ENCODE measurements at regions of chr4 and their contacts with region 1.

Region 1: DNA sequence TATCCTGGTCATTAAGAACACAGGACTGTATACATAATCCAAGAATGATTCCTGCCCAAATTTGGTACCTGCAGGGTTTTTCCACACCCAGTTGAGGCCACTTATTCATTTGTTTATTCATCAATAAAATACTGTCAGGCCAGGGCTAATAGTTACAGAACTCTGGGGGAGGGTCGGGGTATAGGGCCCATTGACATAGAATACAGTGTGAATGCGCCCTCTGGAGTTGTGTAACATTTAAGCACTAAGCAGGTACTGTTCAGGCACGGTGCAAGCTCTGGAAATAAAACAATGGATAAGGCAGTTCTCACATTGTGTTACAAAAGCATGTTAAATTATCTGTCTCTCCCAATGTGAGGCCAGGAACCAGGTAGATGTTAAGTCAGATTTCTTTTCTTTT is 30.8 kb upstream of the LRBA start:
- DNase-seq: peak; percentile 36
- H3K4me3 Mint-ChIP-seq: no peak overlapping the region
- H3K27ac Mint-ChIP-seq: no peak overlapping the region
- H3K4me1 Mint-ChIP-seq: peaks cover 4% of the 10 kb centered on the region
- H3K27me3 Mint-ChIP-seq: no peaks in the 10 kb centered on the region

Region 2: GRCh38 chr4:150010525-150011126 is 1035.3 kb before region 1 on chr4:
- CTCF ChIA-PET with region 1: no interaction called
- intact Hi-C with region 1: loop called (anchors 10 kb)
- DNase-seq: peak; percentile 15
- H3K4me3 Mint-ChIP-seq: no peak overlapping the region
- H3K27ac Mint-ChIP-seq: no peak overlapping the region
- H3K4me1 Mint-ChIP-seq: no peaks in the 10 kb centered on the region
- H3K27me3 Mint-ChIP-seq: peaks cover 10% of the 10 kb centered on the region

Region 3: DNA sequence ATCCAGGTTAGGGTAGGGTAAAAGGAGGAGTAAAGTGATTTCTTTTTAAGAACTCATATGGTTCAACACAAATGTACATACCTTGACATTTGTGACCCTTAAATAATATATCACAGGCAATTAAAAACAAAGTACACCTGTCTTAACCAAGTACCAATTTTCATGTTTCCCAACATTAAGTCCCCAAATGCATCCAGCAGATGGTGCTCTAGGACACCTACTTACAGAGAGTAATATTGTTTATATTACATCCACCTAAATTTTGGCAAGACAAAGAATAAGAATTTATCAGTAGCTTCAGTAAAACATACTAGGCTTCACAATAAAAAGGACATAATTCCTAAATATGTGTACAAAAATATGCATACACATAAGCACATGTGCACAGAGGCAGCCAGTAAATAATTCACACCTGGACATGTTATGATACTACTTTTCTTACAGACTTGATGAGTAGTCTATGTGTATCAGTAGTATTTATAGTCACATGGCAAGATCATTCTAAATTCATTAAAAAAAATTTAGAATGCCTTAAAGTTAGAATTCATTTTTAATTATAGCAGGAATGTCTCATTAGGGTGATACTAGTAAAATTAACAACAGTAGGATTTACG is 747.9 kb before region 1 on chr4:
- CTCF ChIA-PET with region 1: no interaction called
- intact Hi-C with region 1: loop called (anchors 2 kb)
- DNase-seq: peak; percentile 68
- H3K4me3 Mint-ChIP-seq: no peak overlapping the region
- H3K27ac Mint-ChIP-seq: no peak overlapping the region
- H3K4me1 Mint-ChIP-seq: peaks cover 14% of the 10 kb centered on the region
- H3K27me3 Mint-ChIP-seq: no peaks in the 10 kb centered on the region

Region 4: DNA sequence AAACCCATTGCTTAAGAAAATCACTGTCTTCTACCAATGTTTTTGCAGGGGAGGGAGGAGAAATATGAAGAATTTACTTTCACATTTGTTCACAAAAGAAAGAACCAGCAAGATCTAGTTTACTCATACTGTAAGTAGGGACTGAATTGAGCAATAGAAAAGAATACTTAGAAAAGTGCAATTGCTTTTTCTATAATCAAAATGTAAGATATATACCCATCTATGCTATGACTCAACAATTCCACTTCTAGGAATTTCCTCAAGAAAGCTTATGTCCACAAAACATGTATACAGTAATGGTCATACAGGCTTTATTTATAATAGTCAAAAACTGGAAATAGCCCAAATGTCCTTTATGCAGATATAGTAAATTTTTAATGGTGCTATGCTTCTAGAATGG is 227.2 kb before region 1 on chr4:
- CTCF ChIA-PET with region 1: no interaction called
- intact Hi-C with region 1: loop called (anchors 5 kb)
- DNase-seq: no peak
- H3K4me3 Mint-ChIP-seq: no peak overlapping the region
- H3K27ac Mint-ChIP-seq: no peak overlapping the region
- H3K4me1 Mint-ChIP-seq: peaks cover 13% of the 10 kb centered on the region
- H3K27me3 Mint-ChIP-seq: no peaks in the 10 kb centered on the region

Region 5: GRCh38 chr4:151015459-151016347 is 30.2 kb before region 1 on chr4:
- CTCF ChIA-PET with region 1: interaction called, 4 read pairs
- intact Hi-C with region 1: loop called (anchors 1 kb)
- DNase-seq: peak; percentile 71
- H3K4me3 Mint-ChIP-seq: peak overlapping the region; percentile 100
- H3K27ac Mint-ChIP-seq: peak overlapping the region; percentile 99
- H3K4me1 Mint-ChIP-seq: peaks cover 23% of the 10 kb centered on the region
- H3K27me3 Mint-ChIP-seq: no peaks in the 10 kb centered on the region

Region 6: GRCh38 chr4:151304755-151305154 is 258.8 kb after region 1 on chr4:
- CTCF ChIA-PET with region 1: no interaction called
- intact Hi-C with region 1: no loop called
- DNase-seq: no peak
- H3K4me3 Mint-ChIP-seq: no peak overlapping the region
- H3K27ac Mint-ChIP-seq: no peak overlapping the region
- H3K4me1 Mint-ChIP-seq: peaks cover 2% of the 10 kb centered on the region
- H3K27me3 Mint-ChIP-seq: no peaks in the 10 kb centered on the region

Measured in activated naive CD4-positive, alpha-beta T cell treated with anti-CD3 and anti-CD28 coated beads for 36 hours (primary cell).